ENCODE measurements at regions of chr1 and their contacts with region 1.

Region 1: DNA sequence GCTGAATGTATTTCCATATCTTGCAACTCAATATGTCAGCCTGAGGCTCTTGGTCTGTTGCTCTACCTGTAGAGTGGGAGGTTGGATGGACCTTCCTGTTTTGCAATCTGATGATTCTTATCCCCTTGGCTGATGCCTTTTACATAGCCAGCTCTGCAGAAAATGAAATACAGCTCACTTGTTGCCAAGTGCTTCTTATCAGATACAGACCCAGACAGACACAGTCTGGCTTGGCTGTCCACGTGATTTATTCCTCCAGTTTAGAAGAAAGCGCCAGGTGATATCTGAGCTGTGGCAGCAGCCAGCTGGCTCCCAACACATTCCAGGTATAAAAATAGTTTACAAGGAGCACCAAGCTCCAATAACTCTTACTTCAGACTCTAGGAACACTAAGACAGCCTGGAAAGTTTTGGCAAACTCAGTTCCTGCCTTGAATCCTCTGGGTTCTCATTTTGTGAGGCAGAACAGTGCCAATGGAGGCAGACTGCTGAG is 479.2 kb upstream of the USP24 start:
- DNase-seq: peak; percentile 65 to 70
- H3K4me3 ChIP-seq: no peak overlapping the region
- H3K27ac ChIP-seq: no peak overlapping the region
- H3K4me1 ChIP-seq: no peaks in the 10 kb centered on the region
- H3K27me3 ChIP-seq: no peaks in the 10 kb centered on the region
- CTCF ChIP-seq: no peak

Region 2: DNA sequence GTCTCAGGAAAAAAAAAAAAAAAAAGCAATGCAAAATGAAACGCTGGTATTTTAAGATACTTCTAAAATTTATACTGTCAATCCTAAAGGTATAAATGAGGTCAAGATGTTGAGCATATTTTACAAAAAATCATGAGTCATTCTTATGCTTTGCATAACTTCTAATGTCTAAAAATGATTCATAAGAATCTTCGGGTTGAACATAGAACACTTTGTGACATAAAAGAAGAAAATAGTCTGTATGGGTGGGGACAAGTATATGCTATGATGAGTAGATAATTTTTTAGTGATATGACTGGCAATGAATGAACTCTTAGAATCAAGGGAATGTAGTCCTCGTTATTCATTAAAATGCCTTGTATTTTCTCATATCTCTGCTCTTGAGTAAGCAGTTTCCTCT is 62.3 kb before region 1 on chr1:
- CTCF ChIA-PET with region 1: no interaction called
- POLR2A ChIA-PET with region 1: no interaction called
- intact Hi-C with region 1: loop called (anchors 1 kb)
- DNase-seq: peak in 1 of 2 experiments; percentile 79
- H3K4me3 ChIP-seq: no peak overlapping the region
- H3K27ac ChIP-seq: peak overlapping the region; percentile 45
- H3K4me1 ChIP-seq: peaks cover 27% of the 10 kb centered on the region
- H3K27me3 ChIP-seq: no peaks in the 10 kb centered on the region
- CTCF ChIP-seq: no peak

Region 3: DNA sequence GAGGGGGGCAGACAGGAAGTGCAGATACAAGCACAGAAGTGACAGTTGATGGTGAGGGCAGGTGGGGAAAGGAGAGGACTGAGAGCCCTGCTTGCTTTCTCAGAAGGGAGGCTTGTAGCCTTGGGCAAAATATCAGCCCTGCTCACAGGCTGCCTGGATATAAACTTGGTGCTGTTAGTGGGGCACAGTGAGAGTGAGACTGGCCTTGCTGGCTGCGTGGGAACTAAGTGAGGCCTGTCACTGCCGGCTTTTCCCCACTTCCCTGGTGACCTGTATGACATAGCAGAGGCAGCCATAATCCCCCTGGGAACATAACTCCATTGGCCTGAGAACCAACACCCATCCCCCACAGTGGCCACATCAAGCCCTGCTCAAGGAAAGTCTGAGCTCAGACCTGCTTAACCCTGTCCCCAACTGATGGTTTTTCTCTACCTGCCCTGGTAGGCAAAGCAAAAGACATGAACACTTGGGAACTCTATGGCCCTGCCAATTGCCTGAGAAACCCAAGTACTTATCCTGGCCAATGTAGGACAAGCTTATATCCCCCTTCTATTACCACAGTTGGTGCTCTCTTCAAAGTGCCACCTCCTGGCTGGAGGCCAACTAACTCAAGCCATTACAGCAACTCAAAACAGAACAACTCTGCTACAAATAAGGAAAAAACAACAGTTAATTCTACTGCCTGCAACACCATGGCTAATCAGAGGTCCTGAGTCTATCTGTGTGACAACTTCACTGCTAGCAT is 412.3 kb after region 1 on chr1:
- CTCF ChIA-PET with region 1: no interaction called
- POLR2A ChIA-PET with region 1: no interaction called
- intact Hi-C with region 1: no loop called
- DNase-seq: no peak
- H3K4me3 ChIP-seq: no peak overlapping the region
- H3K27ac ChIP-seq: no peak overlapping the region
- H3K4me1 ChIP-seq: no peaks in the 10 kb centered on the region
- H3K27me3 ChIP-seq: no peaks in the 10 kb centered on the region
- CTCF ChIP-seq: no peak